Lower leg skin (tissue), 4 donors: ENCODE measurements at regions of chr13 and their contacts with region 1.

Region 1: DNA sequence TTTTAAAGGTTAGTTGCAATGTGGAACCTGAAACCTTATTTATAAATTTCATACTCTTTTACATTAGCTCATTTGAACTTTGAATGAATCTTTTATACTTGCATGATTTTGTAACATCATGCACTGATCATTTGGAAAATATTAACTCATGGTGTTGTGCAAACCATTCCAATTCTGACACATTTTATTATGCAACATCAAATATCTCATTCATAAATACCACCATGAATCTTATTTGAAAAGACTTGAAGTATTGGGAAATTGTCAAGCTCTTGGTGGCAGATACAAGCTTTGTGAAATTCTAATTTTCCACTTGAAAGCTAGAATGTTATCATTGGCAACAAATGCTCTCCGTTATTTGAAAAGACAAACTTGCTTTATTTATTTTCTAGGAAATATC is 379.9 kb upstream of the PCDH20 start:
- DNase-seq: no peak
- H3K4me3 ChIP-seq: no peak overlapping the region
- CTCF ChIP-seq: no peak
- POLR2A ChIP-seq: no peak

Region 2: DNA sequence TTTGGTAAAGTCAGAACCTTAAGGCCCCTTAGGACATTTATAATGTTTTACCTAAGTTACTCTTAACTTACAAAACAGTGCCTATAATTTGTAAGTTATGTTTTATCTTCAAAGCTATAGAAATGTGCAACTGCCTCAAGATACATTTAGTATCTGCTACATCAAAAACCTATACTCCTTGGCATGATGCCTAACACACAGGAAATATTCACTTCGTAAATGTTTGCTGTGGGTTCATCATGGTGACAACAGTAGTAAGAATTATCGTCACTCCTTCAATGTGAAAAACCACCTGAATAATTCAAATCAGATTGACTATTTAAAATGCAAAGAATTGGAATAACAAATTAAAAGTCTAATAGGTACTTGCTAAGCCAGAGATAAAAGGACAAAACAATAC is 1816.0 kb before region 1 on chr13:
- intact Hi-C with region 1: loop called (anchors 5 kb)
- DNase-seq: no peak
- H3K4me3 ChIP-seq: no peak overlapping the region
- CTCF ChIP-seq: no peak
- POLR2A ChIP-seq: no peak

Region 3: GRCh38 chr13:60701895-60702294 is 1093.7 kb before region 1 on chr13:
- intact Hi-C with region 1: no loop called
- DNase-seq: no peak
- H3K4me3 ChIP-seq: no peak overlapping the region
- CTCF ChIP-seq: no peak
- POLR2A ChIP-seq: no peak